ENCODE measurements at regions of chr6 and their contacts with region 1.

Region 1: GRCh38 chr6:6494677-6495076 is 93.8 kb upstream of the LY86 start:
- DNase-seq: peak; percentile 45
- ATAC-seq: peak; percentile 100
- H3K4me3 ChIP-seq: no peak overlapping the region
- H3K27ac ChIP-seq: no peak overlapping the region
- H3K4me1 ChIP-seq: no peaks in the 10 kb centered on the region
- H3K27me3 ChIP-seq: no peaks in the 10 kb centered on the region
- CTCF ChIP-seq: peak; percentile 74 to 84 (median 78)
- EP300 ChIP-seq: no peak
- POLR2A ChIP-seq: no peak
- RAD21 ChIP-seq: peak; percentile 86

Region 2: GRCh38 chr6:6057424-6058053 is 437.1 kb before region 1 on chr6:
- CTCF ChIA-PET with region 1: interaction called, 43 read pairs
- POLR2A ChIA-PET with region 1: no interaction called
- RAD21 ChIA-PET with region 1: interaction called, 30 read pairs
- SMC1A ChIA-PET with region 1: interaction called, 14 read pairs
- in situ Hi-C with region 1: no loop called
- intact Hi-C with region 1: loop called (anchors 2 kb)
- DNase-seq: peak; percentile 53
- ATAC-seq: peak; percentile 97
- H3K4me3 ChIP-seq: no peak overlapping the region
- H3K27ac ChIP-seq: no peak overlapping the region
- H3K4me1 ChIP-seq: no peaks in the 10 kb centered on the region
- H3K27me3 ChIP-seq: no peaks in the 10 kb centered on the region; a peak in 2 of 4 replicates
- CTCF ChIP-seq: peak; percentile 54 to 68 (median 66); a peak in 5 of 6 replicates
- EP300 ChIP-seq: no peak
- POLR2A ChIP-seq: no peak
- RAD21 ChIP-seq: peak; percentile 74

Region 3: GRCh38 chr6:6131492-6132109 is 363.1 kb before region 1 on chr6:
- CTCF ChIA-PET with region 1: interaction called, 11 read pairs
- POLR2A ChIA-PET with region 1: no interaction called
- RAD21 ChIA-PET with region 1: interaction called, 4 read pairs
- SMC1A ChIA-PET with region 1: interaction called, 17 read pairs
- in situ Hi-C with region 1: no loop called
- intact Hi-C with region 1: no loop called
- DNase-seq: no peak
- ATAC-seq: peak; percentile 67
- H3K4me3 ChIP-seq: no peak overlapping the region
- H3K27ac ChIP-seq: no peak overlapping the region
- H3K4me1 ChIP-seq: no peaks in the 10 kb centered on the region
- H3K27me3 ChIP-seq: no peaks in the 10 kb centered on the region
- CTCF ChIP-seq: peak; percentile 32 to 63 (median 45); a peak in 5 of 6 replicates
- EP300 ChIP-seq: no peak
- POLR2A ChIP-seq: no peak
- RAD21 ChIP-seq: peak; percentile 62

Region 4: DNA sequence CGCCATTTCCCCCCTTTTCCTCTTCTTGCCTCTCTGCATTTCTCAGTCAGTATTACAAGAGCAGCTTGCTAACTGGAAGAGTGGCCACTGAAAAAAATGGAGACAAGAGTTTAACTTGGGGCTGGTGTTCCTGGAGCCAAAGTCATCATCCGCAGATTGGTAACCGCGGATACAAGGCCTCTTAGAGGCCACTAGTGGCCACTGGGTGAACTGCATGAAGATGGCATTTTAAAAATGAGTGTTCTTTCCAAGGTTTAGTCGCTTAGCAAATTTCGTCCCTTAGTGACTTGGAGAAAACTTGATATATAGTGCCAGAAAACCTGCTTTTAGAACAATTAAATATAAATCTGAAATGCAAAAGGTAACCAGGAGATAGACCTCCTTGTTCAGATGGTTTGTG is 179.0 kb before region 1 on chr6:
- CTCF ChIA-PET with region 1: interaction called, 6 read pairs
- POLR2A ChIA-PET with region 1: no interaction called
- RAD21 ChIA-PET with region 1: interaction called, 10 read pairs
- SMC1A ChIA-PET with region 1: interaction called, 10 read pairs
- in situ Hi-C with region 1: no loop called
- intact Hi-C with region 1: no loop called
- DNase-seq: no peak
- ATAC-seq: peak; percentile 26; the same call in 2 of the 3 replicates
- H3K4me3 ChIP-seq: no peak overlapping the region
- H3K27ac ChIP-seq: no peak overlapping the region
- H3K4me1 ChIP-seq: peaks cover 11% of the 10 kb centered on the region
- H3K27me3 ChIP-seq: peaks cover 0 to 4% of the 10 kb centered on the region in 2 experiments; a peak in 2 of 4 replicates
- CTCF ChIP-seq: peak; percentile 78 to 89 (median 89)
- EP300 ChIP-seq: no peak
- POLR2A ChIP-seq: no peak
- RAD21 ChIP-seq: peak; percentile 75

Region 5: DNA sequence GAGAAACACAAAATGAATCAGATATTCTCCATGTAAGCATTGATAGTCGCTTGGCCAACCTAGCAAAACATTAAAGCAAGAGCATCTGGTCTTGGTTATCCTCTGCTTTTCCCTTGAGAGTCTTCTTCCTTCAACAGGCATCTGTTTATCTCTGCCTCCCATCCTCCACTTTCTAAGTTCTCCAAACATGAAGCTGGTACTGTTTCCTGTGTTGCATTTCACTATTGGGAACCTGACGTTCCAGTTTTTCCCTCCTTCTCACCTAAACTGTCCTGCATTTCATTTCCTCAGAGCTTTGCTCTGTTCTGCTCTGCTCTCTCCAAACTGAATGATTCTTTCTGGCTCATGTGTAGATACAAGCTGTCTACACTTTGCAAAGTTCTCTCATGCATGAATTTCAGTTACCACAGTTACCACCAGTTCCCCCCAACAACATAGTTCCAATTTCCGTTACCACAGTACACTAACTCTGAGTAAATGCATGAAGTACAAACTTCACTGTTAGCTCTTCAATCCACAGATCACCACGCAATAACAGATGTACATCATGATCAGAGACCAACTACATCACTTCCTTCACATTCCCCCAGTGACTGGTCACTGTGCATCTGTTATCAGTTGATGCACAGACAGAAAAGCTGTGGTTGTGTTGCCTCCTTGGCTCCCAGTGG is 87.5 kb before region 1 on chr6:
- CTCF ChIA-PET with region 1: interaction called, 9 read pairs
- POLR2A ChIA-PET with region 1: no interaction called
- RAD21 ChIA-PET with region 1: interaction called, 29 read pairs
- SMC1A ChIA-PET with region 1: interaction called, 3 read pairs
- in situ Hi-C with region 1: no loop called
- intact Hi-C with region 1: loop called (anchors 5 kb)
- DNase-seq: peak; percentile 97
- ATAC-seq: peak; percentile 95
- H3K4me3 ChIP-seq: peak overlapping the region; percentile 23; the same call in 1 of the 2 replicates
- H3K27ac ChIP-seq: peak overlapping the region; percentile 54
- H3K4me1 ChIP-seq: peaks cover 22% of the 10 kb centered on the region
- H3K27me3 ChIP-seq: no peaks in the 10 kb centered on the region
- CTCF ChIP-seq: no peak
- EP300 ChIP-seq: peak; percentile 76 to 83; a peak in 3 of 4 replicates
- POLR2A ChIP-seq: peak; percentile 47; the same call in 1 of the 2 replicates
- RAD21 ChIP-seq: 0 out of 2 replicates have a peak, but pooled peaks have one; percentile 8

Region 6: GRCh38 chr6:6434151-6434550 is 60.5 kb before region 1 on chr6:
- CTCF ChIA-PET with region 1: no interaction called
- POLR2A ChIA-PET with region 1: no interaction called
- RAD21 ChIA-PET with region 1: no interaction called
- SMC1A ChIA-PET with region 1: no interaction called
- in situ Hi-C with region 1: no loop called
- intact Hi-C with region 1: no loop called
- DNase-seq: no peak
- ATAC-seq: no peak
- H3K4me3 ChIP-seq: no peak overlapping the region
- H3K27ac ChIP-seq: no peak overlapping the region
- H3K4me1 ChIP-seq: no peaks in the 10 kb centered on the region
- H3K27me3 ChIP-seq: no peaks in the 10 kb centered on the region
- CTCF ChIP-seq: no peak
- EP300 ChIP-seq: no peak
- POLR2A ChIP-seq: no peak
- RAD21 ChIP-seq: no peak

Region 7: DNA sequence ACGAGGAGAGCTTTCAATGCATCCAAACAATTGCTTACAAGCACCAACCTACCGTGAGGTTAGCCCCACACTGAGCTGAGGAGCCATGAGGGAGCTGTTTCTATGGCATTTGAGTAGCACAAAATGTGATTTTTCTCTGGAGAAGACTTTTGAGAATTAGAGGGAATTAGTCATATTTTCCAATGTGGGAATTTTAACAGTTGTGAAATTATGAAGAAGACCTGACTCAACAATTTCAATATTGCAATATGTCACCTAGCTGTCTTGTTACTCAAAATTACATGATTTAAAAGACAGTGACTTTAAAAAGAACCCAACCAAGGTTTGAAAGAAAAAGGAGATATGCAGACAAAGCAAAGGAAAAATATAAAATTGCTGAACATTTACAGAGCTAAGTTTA is 31.3 kb after region 1 on chr6:
- CTCF ChIA-PET with region 1: no interaction called
- POLR2A ChIA-PET with region 1: no interaction called
- RAD21 ChIA-PET with region 1: no interaction called
- SMC1A ChIA-PET with region 1: interaction called, 10 read pairs
- in situ Hi-C with region 1: no loop called
- intact Hi-C with region 1: no loop called
- DNase-seq: no peak
- ATAC-seq: no peak
- H3K4me3 ChIP-seq: no peak overlapping the region
- H3K27ac ChIP-seq: no peak overlapping the region
- H3K4me1 ChIP-seq: no peaks in the 10 kb centered on the region
- H3K27me3 ChIP-seq: no peaks in the 10 kb centered on the region
- CTCF ChIP-seq: no peak
- EP300 ChIP-seq: no peak
- POLR2A ChIP-seq: no peak
- RAD21 ChIP-seq: no peak